Uterus (tissue), 4 donors: ENCODE measurements at regions of chr15 and their contacts with region 1.

Region 1: DNA sequence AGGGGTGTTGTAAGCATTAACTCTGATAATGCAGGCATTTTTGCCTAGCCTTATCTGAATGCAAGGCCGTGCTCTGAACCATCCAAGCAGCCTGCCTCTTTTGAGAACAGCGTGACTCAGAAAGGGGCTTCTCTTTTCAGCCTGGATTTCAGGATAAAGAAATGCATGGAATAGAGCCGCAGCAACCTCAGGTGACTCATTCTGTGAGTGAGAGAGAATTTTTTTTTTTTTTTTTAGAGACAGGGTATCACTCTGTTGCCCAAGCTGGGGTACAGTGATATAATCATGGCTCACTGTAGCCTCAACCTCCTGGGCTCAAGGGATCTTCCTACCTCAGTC is 20.6 kb upstream of the PDE8A start:
- DNase-seq: no peak
- H3K4me3 ChIP-seq: no peak overlapping the region
- H3K27ac ChIP-seq: no peak overlapping the region
- H3K4me1 ChIP-seq: no peaks in the 10 kb centered on the region
- H3K27me3 ChIP-seq: no peaks in the 10 kb centered on the region
- CTCF ChIP-seq: no peak
- POLR2A ChIP-seq: no peak

Region 2: DNA sequence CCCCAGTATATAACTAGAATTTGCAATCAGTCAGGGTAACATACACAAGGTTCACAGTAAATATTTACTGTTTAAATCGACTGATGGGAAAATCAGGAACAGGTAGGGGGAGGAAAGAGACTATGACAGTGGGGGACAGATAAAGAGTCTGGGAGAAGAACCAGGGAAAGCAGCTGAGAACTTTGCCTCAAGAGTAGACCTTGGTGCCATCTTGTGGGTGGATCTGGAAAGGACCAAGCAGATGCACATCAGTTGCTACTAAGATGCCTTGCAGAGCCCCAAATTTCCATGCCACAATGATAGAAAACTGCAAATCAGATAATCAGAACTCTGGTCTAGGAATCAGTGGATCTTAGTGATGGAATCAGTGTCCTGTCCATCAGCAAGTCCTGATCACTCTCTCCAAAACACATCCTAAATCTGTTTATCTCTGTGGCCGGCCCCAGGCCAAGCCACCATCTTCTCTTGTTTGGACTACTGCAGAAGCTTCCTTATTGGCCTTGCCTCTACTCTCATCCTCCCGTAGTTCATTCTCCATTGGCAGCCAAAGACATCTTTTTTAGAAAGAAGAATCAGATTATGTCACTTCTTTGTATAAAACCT is 83.3 kb after region 1 on chr15:
- intact Hi-C with region 1: loop called (anchors 10 kb)
- DNase-seq: peak; percentile 59 to 61
- H3K4me3 ChIP-seq: no peak overlapping the region
- H3K27ac ChIP-seq: no peak overlapping the region
- H3K4me1 ChIP-seq: no peaks in the 10 kb centered on the region
- H3K27me3 ChIP-seq: no peaks in the 10 kb centered on the region
- CTCF ChIP-seq: peak; percentile 52 to 78 (median 72)
- POLR2A ChIP-seq: no peak